ENCODE measurements at regions of chr2 and their contacts with region 1.

Region 1: DNA sequence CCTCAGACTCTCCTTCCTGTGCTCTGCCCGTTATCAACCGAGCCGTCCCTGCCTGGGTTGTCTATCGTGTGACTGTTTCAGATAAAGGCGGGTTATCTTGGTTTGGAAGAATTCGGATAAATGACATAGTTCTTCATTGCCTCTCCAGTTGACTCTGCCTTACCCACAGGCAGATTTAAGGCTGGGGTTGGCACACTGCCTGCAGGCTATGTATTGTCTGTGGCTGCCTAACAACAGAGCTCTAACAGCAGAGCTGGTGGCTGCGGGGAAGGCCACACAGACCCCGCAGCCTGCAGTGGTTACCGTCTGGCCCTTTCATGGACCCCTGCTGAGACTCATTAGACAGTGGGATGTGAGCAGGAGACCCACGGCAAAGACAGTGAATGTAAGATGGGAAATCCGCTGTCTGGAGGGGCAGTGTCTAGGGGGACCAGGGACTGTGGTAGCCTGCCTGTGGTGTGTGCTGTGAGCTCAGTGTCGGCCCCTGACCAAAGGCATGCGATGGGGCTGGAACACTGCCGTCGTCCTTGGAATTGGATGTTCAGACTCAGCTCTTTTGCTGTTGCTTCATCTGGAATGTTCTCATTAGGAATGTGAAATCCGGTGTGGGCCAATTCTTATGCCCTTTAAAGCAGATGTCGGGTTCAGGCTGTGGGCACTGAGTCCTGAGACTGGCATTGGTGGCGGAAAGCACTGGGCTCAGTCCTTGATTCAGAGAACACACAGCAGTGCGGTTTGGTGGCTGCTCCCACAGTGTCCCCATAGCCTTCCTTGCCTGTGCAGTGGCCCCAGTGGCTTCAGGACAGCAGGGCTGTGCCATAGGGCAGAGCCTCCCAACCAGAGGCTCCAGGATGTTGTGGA is 44.5 kb downstream of the SH3RF3 start:
- DNase-seq: peak; percentile 87
- ATAC-seq: peak; percentile 52
- H3K4me3 ChIP-seq: no peak overlapping the region
- H3K27ac ChIP-seq: peak overlapping the region; percentile 82
- H3K4me1 ChIP-seq: peaks cover 45% of the 10 kb centered on the region
- H3K27me3 ChIP-seq: no peaks in the 10 kb centered on the region
- CTCF ChIP-seq: no peak
- POLR2A ChIP-seq: peak; percentile 58; the same call in 1 of the 2 replicates
- RAD21 ChIP-seq: no peak

Region 2: GRCh38 chr2:108971661-108972566 is 201.6 kb before region 1 on chr2:
- CTCF ChIA-PET with region 1: no interaction called
- POLR2A ChIA-PET with region 1: no interaction called
- dilution Hi-C with region 1: no loop called
- in situ Hi-C with region 1: no loop called
- intact Hi-C with region 1: no loop called
- DNase-seq: no peak
- ATAC-seq: no peak
- H3K4me3 ChIP-seq: no peak overlapping the region
- H3K27ac ChIP-seq: no peak overlapping the region
- H3K4me1 ChIP-seq: no peaks in the 10 kb centered on the region
- H3K27me3 ChIP-seq: peaks cover 62% of the 10 kb centered on the region
- CTCF ChIP-seq: no peak
- POLR2A ChIP-seq: no peak
- RAD21 ChIP-seq: no peak

Region 3: GRCh38 chr2:109185821-109186570 is 12.5 kb after region 1 on chr2:
- CTCF ChIA-PET with region 1: no interaction called
- POLR2A ChIA-PET with region 1: interaction called, 3 read pairs
- dilution Hi-C with region 1: no loop called
- in situ Hi-C with region 1: no loop called
- intact Hi-C with region 1: loop called (anchors 1 kb)
- DNase-seq: peak; percentile 85
- ATAC-seq: peak; percentile 75
- H3K4me3 ChIP-seq: no peak overlapping the region
- H3K27ac ChIP-seq: peak overlapping the region; percentile 89
- H3K4me1 ChIP-seq: peaks cover 27% of the 10 kb centered on the region
- H3K27me3 ChIP-seq: no peaks in the 10 kb centered on the region
- CTCF ChIP-seq: 0 out of 2 replicates have a peak, but pooled peaks have one; percentile 2
- POLR2A ChIP-seq: no peak; the same call in 1 of the 2 replicates
- RAD21 ChIP-seq: no peak

Region 4: GRCh38 chr2:109213646-109214417 is 40.3 kb after region 1 on chr2:
- CTCF ChIA-PET with region 1: no interaction called
- POLR2A ChIA-PET with region 1: no interaction called
- dilution Hi-C with region 1: no loop called
- in situ Hi-C with region 1: no loop called
- intact Hi-C with region 1: loop called (anchors 5 kb)
- DNase-seq: peak; percentile 67
- ATAC-seq: peak; percentile 8; the same call in 1 of the 2 replicates
- H3K4me3 ChIP-seq: no peak overlapping the region
- H3K27ac ChIP-seq: no peak overlapping the region
- H3K4me1 ChIP-seq: peaks cover 42% of the 10 kb centered on the region
- H3K27me3 ChIP-seq: no peaks in the 10 kb centered on the region
- CTCF ChIP-seq: no peak
- POLR2A ChIP-seq: no peak
- RAD21 ChIP-seq: no peak

Region 5: DNA sequence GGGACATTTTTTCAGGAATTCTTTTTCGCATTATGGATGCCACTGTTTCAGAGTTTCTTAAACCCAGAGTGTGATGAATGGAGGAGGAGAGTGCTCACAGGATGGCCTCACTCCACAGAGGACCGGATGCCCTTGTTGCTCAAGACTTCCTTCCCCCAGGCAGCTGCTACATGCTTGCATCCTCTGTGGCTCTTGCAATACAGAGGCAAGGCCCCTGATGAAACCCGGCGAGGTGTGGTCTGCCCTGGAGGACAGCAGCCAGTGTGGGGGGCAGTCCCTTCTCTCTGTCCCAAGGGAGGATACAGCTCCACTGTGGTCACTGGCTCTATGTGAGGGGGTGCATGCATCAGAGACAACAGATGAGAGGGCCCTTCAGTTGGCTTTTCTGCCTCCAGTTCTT is 65.0 kb after region 1 on chr2:
- CTCF ChIA-PET with region 1: interaction called, 4 read pairs
- POLR2A ChIA-PET with region 1: no interaction called
- dilution Hi-C with region 1: no loop called
- in situ Hi-C with region 1: no loop called
- intact Hi-C with region 1: loop called (anchors 5 kb)
- DNase-seq: peak; percentile 95
- ATAC-seq: peak; percentile 68
- H3K4me3 ChIP-seq: no peak overlapping the region
- H3K27ac ChIP-seq: peak overlapping the region; percentile 96
- H3K4me1 ChIP-seq: peaks cover 45% of the 10 kb centered on the region
- H3K27me3 ChIP-seq: no peaks in the 10 kb centered on the region
- CTCF ChIP-seq: no peak
- POLR2A ChIP-seq: no peak
- RAD21 ChIP-seq: peak; percentile 10; the same call in 1 of the 2 replicates

Region 6: DNA sequence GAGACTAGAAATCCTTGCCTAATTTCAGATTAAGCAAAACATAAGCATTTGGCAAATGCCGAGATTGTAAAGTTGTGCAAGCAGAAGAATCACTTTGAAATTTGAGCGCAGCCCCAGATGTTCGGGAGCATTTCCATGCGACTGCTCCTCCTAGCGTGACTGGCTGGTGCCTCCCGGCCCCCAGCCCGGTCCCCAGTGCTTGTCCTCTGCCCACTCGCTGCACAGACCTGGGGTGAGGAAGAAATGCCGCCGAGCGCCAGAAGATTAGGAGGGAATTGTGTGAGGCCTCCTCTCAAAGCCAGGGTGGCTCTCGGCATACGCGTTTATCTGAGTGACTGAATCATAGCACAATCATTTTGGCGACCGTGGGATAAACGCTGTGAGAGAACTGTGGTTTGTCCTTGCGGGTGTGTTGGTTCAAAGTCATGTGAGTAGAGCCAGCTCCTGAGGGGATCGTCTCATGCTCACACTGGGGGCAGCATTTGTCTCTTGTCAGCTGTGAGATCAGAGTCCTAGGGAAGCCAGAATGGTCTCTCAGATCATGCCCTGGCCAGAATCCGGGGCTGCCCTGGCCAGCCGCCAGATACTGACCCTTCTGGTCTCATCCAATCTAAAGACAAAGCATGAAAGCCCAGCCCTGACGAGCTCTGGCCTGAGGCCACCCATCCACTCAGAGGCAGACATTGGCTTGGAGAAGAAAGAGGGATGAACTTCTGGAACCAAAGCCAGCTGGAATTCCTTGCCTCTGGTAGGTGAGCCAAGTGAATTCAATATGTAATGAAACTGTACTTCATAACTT is 144.8 kb after region 1 on chr2:
- CTCF ChIA-PET with region 1: no interaction called
- POLR2A ChIA-PET with region 1: interaction called, 3 read pairs
- dilution Hi-C with region 1: no loop called
- in situ Hi-C with region 1: no loop called
- intact Hi-C with region 1: loop called (anchors 5 kb)
- DNase-seq: peak; percentile 98
- ATAC-seq: peak; percentile 60
- H3K4me3 ChIP-seq: peak overlapping the region; percentile 2
- H3K27ac ChIP-seq: peak overlapping the region; percentile 73
- H3K4me1 ChIP-seq: peaks cover 41% of the 10 kb centered on the region
- H3K27me3 ChIP-seq: no peaks in the 10 kb centered on the region
- CTCF ChIP-seq: peak; percentile 42
- POLR2A ChIP-seq: peak; percentile 53; the same call in 1 of the 2 replicates
- RAD21 ChIP-seq: peak; percentile 31

Measured in IMR-90 (cell line).